ENCODE measurements at regions of chr11 and their contacts with region 1.

Region 1: GRCh38 chr11:85627998-85628770 is at the start of gene TMEM126B:
- DNase-seq: peak; percentile 97 to 99 (median 99)

Region 2: DNA sequence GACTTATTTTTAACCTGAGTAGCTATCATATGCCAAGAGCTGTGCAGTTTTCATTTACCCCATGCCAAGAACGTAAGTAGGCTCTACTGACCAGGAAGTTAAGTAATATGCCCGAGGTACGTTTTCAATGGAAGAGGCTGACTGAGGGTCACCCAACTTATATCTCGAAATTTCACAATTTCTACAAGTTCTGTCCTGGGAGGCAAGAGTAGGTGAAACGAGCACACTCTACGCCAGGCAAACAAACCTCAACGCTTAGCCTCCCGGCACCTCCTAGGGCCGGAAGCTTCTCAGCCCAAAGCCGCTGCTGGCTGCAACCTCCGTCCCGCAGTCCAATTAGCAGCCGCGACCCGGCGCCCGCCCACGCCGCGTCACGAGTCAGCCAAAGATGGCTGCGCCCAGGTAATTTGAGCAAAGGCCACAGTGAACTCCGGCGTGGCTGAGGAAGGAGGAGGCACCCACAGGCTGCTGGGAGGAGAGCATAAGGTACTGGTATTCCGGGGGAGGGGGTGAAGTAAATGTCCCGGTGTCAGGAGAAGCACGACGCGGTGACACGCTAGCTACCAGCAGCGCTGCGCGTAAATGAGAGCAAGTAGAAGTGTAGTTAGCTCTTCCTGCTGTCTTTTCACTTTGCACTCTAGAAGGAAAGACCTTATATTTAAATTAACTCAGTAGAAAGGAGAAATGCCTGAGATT is 19.6 kb after region 1 on chr11 and contains the start of gene TMEM126A:
- intact Hi-C with region 1: loop called (anchors 2 kb)
- DNase-seq: peak; percentile 86 to 96 (median 93)

Region 3: DNA sequence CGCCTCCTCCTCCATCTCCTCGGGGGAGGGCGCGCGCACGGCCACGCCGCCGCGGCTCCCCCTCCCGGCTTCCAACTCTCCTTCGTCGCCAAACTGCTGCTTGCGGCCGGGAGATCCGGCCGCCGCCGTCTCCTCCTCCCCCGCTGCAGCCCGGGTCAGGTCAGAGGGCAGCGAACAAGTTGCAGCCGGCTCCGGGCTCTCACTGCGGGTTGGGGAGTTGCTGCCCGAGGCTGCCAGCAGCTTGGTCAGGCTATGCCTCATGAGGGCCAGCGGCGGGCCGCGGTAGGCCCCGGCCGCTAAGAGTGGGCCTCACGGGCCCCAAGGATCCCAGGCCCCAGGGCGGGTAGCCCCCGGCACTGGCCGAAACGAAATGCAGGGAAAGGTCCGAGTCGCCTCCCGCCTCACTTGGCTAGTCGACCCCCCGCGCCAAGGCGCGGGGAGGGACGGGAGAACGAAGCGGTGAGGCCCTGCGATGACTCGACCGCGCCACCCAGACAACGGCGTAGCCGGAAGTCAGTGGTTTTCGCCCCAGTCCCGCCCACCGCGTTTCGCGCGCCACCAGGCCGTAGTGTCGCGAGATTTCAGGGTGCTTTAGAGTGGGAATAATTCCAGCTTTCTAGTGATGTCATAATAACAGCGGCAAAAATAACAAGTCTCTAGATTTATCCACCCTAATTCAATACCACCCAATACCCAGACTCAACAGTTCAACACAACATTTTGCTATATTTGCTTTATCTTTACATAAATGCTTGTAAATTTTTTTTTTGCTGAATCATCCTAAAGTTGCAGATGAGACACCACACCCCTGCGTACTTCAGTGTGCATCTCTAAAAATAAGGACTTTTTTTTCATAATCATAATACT is 36.7 kb after region 1 on chr11 and contains the start of gene CREBZF:
- intact Hi-C with region 1: loop called (anchors 2 kb)
- DNase-seq: peak; percentile 87 to 98 (median 96)